ENCODE measurements at regions of chr1 and their contacts with region 1.

Region 1: GRCh38 chr1:51906306-51907078 is 28.0 kb upstream of the NRDC start:
- DNase-seq: no peak
- ATAC-seq: no peak
- H3K4me3 ChIP-seq: no peak overlapping the region
- H3K27ac ChIP-seq: no peak overlapping the region
- H3K4me1 ChIP-seq: no peaks in the 10 kb centered on the region
- H3K27me3 ChIP-seq: peaks cover 0 to 49% (median 2%) of the 10 kb centered on the region in 3 donors
- CTCF ChIP-seq: no peak

Region 2: DNA sequence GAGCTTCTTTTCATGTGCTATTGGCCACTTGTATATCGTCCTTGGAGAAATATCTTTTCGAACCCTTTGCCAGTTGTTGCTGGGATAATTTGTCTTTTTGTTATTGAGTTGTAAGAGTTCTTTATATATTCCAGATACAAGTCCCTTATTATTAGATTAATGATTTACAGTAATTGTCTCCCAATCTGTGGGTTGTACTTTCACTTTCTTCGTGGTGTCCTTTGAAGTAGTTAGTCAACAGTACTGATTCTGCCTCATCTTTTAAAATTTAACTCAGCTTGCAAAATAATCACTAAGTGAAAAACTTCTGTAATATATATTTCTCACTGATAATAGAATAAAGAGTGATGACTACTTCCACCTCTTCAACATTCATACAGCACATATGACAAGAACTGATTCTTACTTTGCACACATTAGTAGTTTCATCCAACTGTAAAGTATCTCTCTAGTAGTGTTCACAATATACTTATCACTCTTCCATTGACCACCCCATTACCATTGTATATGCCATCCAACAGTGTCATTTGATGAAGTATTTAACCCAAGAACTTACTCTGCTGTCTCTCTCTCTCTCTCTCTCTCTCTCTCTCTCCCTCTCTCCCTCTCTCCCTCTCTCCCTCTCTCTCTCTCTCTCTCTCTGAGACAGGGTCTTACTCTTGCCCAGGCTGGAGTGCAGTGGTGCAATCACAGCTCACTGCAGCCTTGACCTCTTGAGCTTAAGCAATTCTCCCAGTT is 1379.1 kb before region 1 on chr1:
- intact Hi-C with region 1: no loop called
- DNase-seq: no peak
- ATAC-seq: no peak
- H3K4me3 ChIP-seq: no peak overlapping the region
- H3K27ac ChIP-seq: no peak overlapping the region
- H3K4me1 ChIP-seq: no peaks in the 10 kb centered on the region
- H3K27me3 ChIP-seq: no peaks in the 10 kb centered on the region
- CTCF ChIP-seq: no peak

Region 3: DNA sequence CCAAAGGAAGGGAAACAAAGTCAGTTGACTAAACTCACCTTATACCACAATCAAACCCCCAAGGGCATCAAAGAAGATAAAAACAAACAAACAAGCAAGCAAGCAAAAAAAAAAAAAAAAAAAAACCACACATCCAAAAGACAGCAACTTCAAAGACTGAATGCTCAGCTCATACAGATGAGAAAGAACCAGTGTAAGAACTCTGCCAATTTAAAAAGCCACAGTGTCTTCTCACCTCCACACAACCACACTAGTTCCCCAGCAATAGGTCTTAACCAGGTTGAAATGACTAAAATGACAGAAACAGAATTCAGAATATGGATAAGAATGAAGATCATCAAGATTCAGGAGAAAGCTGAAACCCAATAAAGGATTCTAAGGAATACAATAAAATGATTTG is 1139.8 kb before region 1 on chr1:
- intact Hi-C with region 1: no loop called
- DNase-seq: no peak
- ATAC-seq: no peak
- H3K4me3 ChIP-seq: no peak overlapping the region
- H3K27ac ChIP-seq: no peak overlapping the region
- H3K4me1 ChIP-seq: peaks cover 11% of the 10 kb centered on the region
- H3K27me3 ChIP-seq: no peaks in the 10 kb centered on the region
- CTCF ChIP-seq: no peak

Region 4: GRCh38 chr1:51956528-51957509 is 50.3 kb after region 1 on chr1:
- intact Hi-C with region 1: no loop called
- DNase-seq: no peak
- ATAC-seq: no peak
- H3K4me3 ChIP-seq: no peak overlapping the region
- H3K27ac ChIP-seq: no peak overlapping the region
- H3K4me1 ChIP-seq: no peaks in the 10 kb centered on the region
- H3K27me3 ChIP-seq: peaks cover 0 to 6% (median 2%) of the 10 kb centered on the region in 3 donors
- CTCF ChIP-seq: no peak

Region 5: DNA sequence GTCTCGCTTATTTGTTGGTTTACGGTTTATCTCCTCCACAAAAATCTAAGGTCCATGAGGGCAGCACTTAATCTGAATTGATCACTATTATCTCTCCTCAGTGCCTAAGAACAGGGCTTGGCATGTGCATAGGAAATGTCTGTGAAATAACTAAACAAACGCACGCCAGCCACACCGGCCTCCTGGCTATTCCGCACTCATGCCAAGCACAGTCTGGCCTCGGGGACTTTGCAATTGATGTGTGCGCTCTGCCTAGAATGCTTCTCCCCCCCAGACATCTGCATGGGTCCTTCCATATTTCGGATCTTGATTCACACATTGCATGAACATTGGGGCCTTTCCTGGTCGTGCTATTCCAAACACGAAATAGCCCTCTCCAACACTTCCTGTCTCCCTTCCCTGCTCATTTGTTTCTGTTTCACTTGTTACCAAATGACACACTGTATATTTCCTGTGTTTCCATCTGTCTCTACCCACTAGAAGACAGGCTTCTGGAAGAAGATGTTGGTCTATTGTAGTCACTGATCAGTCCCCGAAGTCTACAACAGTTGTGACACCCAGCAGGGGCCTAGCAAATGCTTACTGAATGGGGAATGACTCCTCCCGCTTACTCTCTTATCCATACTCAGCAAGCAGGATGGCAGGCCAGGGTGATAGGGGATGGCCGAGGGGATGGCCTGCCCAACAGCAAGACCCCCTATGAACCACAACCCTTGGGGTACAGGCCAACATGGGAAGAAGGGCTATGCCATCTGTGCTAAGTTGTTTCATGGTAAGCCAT is 1738.6 kb after region 1 on chr1:
- intact Hi-C with region 1: loop called in 1 of 2 experiments (anchors 5 kb)
- DNase-seq: no peak
- ATAC-seq: no peak
- H3K4me3 ChIP-seq: no peak overlapping the region
- H3K27ac ChIP-seq: no peak overlapping the region
- H3K4me1 ChIP-seq: no peaks in the 10 kb centered on the region
- H3K27me3 ChIP-seq: peaks cover 0 to 13% (median 0%) of the 10 kb centered on the region in 3 donors
- CTCF ChIP-seq: no peak

Measured in psoas muscle (tissue), 8 donors.